ENCODE measurements at regions of chr19 and their contacts with region 1.

Region 1: DNA sequence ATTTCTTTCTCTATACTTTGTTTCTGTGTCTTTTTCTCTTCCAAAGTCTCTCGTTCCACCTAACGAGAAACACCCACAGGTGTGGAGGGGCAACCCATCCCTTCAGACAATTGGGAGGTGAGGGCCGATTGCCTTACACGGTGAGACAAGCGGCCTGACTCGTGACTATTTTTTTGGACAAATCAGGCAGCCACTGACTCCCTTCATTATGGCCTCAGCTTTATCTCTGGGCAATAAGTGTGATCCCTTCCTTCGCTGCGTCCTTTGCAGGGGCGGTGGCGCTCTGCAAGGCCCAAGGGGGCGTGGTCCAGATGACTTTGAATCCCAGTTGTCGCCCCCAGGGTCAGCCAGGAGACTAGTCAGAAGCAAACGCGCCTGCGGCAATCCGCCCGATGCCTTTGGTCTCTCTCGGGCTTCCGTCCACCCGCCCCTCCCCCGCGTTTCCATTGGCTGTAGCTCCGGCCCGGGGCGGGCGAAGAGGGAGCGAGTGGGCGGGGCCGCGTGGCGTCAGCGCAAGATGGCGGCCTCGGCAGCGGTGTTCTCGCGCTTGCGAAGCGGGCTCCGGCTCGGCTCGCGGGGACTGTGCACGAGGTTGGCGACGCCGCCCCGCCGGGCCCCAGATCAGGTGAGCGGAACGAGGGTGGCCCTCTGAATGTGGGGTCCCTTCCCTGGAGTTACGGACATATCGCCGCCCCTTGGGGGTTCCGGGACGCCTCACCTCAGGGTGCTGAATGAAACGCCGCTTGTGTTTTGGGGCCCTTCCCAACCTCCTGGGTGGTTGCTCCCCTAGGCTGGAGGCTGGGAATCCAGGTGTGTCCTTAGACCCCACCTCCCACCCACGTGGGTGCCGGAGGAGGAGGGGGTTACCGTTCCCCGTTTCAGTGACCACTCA is at the start of gene TIMM50:
- DNase-seq: peak; percentile 96 to 97
- H3K4me3 ChIP-seq: peak within 1 kb of the TSS; percentile 89 to 95
- H3K27ac ChIP-seq: peak within 1 kb of the TSS; percentile 78 to 87
- H3K4me1 ChIP-seq: peaks cover 0 to 21% (median 13%) of the 10 kb centered on the region in 4 donors
- H3K27me3 ChIP-seq: no peaks in the 10 kb centered on the region
- CTCF ChIP-seq: no peak

Region 2: DNA sequence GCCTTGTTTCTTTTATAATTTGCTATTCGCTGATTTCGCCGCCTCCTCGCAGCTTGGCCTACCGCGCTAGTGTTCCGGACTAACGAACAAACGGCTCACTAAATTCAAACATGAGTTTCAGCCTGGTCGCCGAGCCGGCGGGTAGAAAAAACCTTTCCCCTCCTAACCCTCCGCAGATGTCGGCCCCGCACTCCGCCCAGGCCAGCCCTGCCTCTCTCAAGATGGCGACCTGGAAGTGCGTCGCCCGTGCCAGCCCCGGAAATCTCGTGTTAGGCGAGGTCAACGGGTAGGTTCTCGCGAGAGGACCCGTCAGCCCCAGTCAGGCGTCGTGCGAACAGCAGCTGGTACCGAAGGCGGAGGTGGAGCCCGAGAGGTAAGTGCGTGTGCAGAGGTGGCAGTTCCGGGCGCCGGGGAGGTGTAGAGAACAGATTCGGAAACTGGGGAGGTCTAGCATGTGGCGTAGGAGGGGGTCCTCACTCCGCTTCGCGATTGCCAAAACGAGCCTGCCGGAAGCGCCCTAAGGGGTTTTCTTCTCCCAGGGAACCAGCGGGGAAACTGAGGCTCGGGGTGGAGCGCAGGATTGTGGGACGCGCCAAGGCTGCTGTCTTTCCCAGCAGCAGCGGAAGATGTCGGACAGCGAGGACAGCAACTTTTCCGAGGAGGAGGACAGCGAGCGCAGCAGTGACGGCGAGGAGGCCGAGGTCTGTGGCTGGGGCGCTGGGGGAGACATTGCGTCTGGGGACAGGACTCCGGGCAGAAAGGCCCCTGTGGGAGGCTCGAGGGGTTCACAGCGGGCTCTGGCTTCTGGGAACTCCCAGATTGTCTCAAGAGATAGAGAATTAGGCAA is 35.1 kb before region 1 on chr19 and contains the start of gene SUPT5H:
- intact Hi-C with region 1: loop called (anchors 2 kb)
- DNase-seq: peak; percentile 96 to 98
- H3K4me3 ChIP-seq: peak within 1 kb of the TSS; percentile 67 to 100
- H3K27ac ChIP-seq: peak within 1 kb of the TSS; percentile 86 to 87
- H3K4me1 ChIP-seq: peaks cover 0 to 52% (median 37%) of the 10 kb centered on the region in 4 donors
- H3K27me3 ChIP-seq: no peaks in the 10 kb centered on the region
- CTCF ChIP-seq: no peak

Region 3: GRCh38 chr19:39539519-39540332 is 59.1 kb after region 1 on chr19 and contains the start of gene EID2:
- intact Hi-C with region 1: loop called (anchors 2 kb)
- DNase-seq: peak; percentile 94 to 96
- H3K4me3 ChIP-seq: peak within 1 kb of the TSS; percentile 77 to 86
- H3K27ac ChIP-seq: peak within 1 kb of the TSS; percentile 95
- H3K4me1 ChIP-seq: peaks cover 0 to 21% (median 13%) of the 10 kb centered on the region in 4 donors
- H3K27me3 ChIP-seq: peaks cover 0 to 2% of the 10 kb centered on the region in 2 donors
- CTCF ChIP-seq: peak; percentile 88 to 91